Spleen (tissue), 13 donors: ENCODE measurements at regions of chr4 and their contacts with region 1.

Region 1: DNA sequence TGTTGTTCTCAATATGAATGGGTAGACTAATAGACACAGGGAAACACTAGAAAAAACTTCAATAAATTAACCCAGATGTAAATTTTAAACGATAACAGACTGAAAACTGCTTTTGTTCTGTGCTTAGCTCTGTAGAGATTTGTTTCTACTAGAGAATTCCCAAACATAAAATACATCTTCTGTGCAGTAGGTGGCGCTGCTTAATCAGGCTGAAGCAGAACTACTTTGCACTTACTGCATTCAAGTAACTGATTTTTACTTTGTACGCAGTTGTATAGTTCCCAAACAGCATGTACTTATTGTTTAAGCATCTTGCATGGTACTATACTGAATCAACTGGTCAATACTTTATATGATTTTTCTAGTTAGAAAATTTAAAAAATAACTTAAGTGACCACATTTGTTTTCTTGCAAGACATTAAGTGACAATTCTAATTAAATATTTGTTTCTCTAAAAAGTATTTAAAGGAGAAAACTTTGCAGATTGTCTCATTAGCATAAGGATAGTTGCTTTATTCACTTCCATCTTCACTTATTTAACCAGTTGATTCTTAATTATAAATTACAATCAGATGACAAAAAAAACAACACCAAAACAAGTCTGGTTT is 490.6 kb downstream of the IL15 start:
- DNase-seq: no peak
- H3K4me3 ChIP-seq: no peak overlapping the region
- H3K27ac ChIP-seq: no peak overlapping the region
- H3K4me1 ChIP-seq: peaks cover 0 to 15% (median 7%) of the 10 kb centered on the region in 6 donors
- H3K27me3 ChIP-seq: no peaks in the 10 kb centered on the region
- CTCF ChIP-seq: peak in 10 of 11 experiments; percentile 37 to 79 (median 70)
- POLR2A ChIP-seq: no peak

Region 2: GRCh38 chr4:142840516-142841123 is 713.6 kb after region 1 on chr4:
- intact Hi-C with region 1: loop called (anchors 5 kb)
- DNase-seq: no peak
- H3K4me3 ChIP-seq: no peak overlapping the region
- H3K27ac ChIP-seq: no peak overlapping the region
- H3K4me1 ChIP-seq: peaks cover 0 to 18% (median 6%) of the 10 kb centered on the region in 6 donors
- H3K27me3 ChIP-seq: peaks cover 0 to 16% (median 6%) of the 10 kb centered on the region in 7 donors
- CTCF ChIP-seq: peak in 7 of 11 experiments; percentile 28 to 75 (median 48)
- POLR2A ChIP-seq: no peak